WTC11 (cell line): ENCODE measurements at regions of chr2 and their contacts with region 1.

Region 1: GRCh38 chr2:175167792-175168563 is at the start of gene ATF2:
- DNase-seq: peak; percentile 99
- ATAC-seq: peak; percentile 96
- H3K4me3 Mint-ChIP-seq: peak within 1 kb of the TSS; percentile 100
- H3K27ac Mint-ChIP-seq: peak within 1 kb of the TSS; percentile 100
- H3K4me1 Mint-ChIP-seq: peaks cover 10% of the 10 kb centered on the region
- H3K27me3 Mint-ChIP-seq: no peaks in the 10 kb centered on the region
- CTCF ChIP-seq: no peak
- total RNA-seq, gene ATF2: 39.9 to 42.5 TPM (median 42.0 TPM) in 3 replicates

Region 2: DNA sequence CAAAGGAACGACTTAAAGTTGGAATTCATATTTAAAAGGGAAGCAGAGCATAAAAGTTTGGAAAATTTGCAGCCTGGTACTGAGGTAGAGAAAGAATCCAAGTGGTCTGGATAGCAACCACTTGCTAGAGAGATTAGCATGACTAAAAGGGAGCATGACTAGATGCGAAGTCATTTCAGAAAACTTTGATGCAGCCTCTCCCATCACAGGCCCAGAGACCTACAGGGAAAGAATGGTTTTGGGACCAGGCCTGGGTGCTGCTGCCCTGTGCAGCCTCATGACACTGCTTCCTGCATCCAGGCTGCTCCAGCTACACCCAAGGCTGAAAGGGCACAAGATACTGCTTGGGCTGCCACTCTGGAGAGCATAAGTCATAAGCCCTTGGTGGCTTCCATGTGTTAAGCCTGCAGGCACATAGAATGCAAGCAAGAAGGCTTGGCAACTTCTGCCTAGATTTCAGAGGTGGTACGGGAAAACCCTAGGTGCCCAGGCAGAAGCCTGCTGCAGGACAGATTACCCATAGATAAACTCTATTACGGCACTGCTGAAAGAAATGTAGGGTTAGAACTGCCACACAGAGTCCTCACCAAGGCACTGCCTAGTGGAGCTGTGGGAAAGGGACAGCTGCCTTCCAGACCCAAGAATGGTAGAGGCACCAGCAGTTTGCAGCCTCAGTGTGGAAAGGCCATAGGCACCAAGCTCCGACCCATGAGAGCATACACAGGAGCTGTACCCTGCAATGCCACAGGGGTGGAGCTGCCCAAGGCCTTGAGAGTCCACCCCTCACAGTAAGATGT is 150.2 kb before region 1 on chr2:
- CTCF ChIA-PET with region 1: no interaction called
- POLR2A ChIA-PET with region 1: no interaction called
- DNase-seq: no peak
- ATAC-seq: no peak
- H3K4me3 Mint-ChIP-seq: no peak overlapping the region
- H3K27ac Mint-ChIP-seq: no peak overlapping the region
- H3K4me1 Mint-ChIP-seq: peaks cover 7% of the 10 kb centered on the region
- H3K27me3 Mint-ChIP-seq: peaks cover 3% of the 10 kb centered on the region; the same call in 1 of the 2 replicates
- CTCF ChIP-seq: no peak

Region 3: DNA sequence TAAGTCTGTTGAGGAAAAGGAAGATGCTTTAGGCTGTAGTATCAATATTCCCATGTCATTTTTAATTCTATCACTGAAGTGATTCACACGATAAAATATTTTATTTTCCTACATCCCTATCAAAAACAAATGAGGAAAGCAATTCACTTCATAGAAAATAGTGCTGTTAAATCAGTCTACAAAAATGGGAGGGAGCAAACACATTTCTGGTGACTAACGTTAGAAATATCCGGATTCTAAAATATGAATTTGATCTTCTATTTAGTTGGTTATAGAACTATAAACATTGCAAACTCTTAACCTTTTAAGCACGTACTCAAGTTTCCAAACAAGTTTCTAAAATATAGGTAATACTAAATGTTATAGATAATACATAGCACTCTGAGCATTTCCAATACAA is 20.8 kb before region 1 on chr2:
- CTCF ChIA-PET with region 1: no interaction called
- POLR2A ChIA-PET with region 1: no interaction called
- DNase-seq: no peak
- ATAC-seq: no peak
- H3K4me3 Mint-ChIP-seq: no peak overlapping the region
- H3K27ac Mint-ChIP-seq: no peak overlapping the region
- H3K4me1 Mint-ChIP-seq: peaks cover 16% of the 10 kb centered on the region
- H3K27me3 Mint-ChIP-seq: no peaks in the 10 kb centered on the region
- CTCF ChIP-seq: no peak

Region 4: GRCh38 chr2:175181104-175181876 is 13.3 kb after region 1 on chr2 and contains the start of gene ATP5MC3:
- CTCF ChIA-PET with region 1: interaction called, 3 read pairs
- POLR2A ChIA-PET with region 1: interaction called, 10 read pairs
- DNase-seq: peak; percentile 93
- ATAC-seq: peak; percentile 92
- H3K4me3 Mint-ChIP-seq: peak within 1 kb of the TSS; percentile 94
- H3K27ac Mint-ChIP-seq: peak within 1 kb of the TSS; percentile 78
- H3K4me1 Mint-ChIP-seq: peaks cover 12% of the 10 kb centered on the region
- H3K27me3 Mint-ChIP-seq: no peaks in the 10 kb centered on the region; the same call in 1 of the 2 replicates
- CTCF ChIP-seq: no peak
- total RNA-seq, gene ATP5MC3: 332 to 370 TPM (median 341 TPM) in 3 replicates